Sigmoid colon (tissue), 7 donors: ENCODE measurements at regions of chr1 and their contacts with region 1.

Region 1: DNA sequence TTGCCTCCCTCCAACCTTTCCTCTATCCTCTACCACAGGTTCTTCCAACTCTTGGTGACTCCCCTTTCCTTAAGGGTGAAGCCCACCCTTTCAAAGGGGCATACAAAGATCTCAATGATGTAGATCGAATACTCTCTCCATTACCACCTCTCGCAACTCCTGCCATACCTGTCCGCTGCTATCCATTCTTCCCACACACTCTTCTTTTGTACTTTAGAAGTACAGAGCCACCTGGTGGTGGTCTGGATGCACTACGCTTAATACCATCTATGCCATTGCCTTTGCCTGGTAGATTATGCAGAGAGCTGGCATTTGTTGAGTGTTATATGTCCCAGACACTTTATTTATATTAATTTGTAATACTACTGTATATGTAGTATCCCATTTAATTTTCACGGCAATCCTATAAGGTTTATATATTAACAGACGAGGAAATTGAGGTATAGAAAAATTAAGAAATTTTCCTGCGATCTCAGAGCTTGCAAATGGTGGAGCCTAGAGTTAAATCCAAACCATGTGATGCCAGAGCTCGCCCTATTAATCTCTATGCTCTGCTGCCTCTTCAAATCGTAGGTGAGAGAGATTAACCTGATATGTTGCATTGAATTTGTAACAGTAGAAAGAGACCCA is 22.9 kb downstream of the TSHB start:
- DNase-seq: no peak
- H3K4me3 ChIP-seq: no peak overlapping the region
- H3K27ac ChIP-seq: peak overlapping the region in 1 of 4 donors; percentile 43
- H3K4me1 ChIP-seq: peaks cover 0 to 36% (median 21%) of the 10 kb centered on the region in 4 donors
- H3K27me3 ChIP-seq: no peaks in the 10 kb centered on the region
- CTCF ChIP-seq: peak; percentile 29 to 81 (median 72)
- EP300 ChIP-seq: no peak
- POLR2A ChIP-seq: no peak

Region 2: GRCh38 chr1:114757455-114758250 is 294.9 kb before region 1 on chr1 and contains the start of gene CSDE1:
- intact Hi-C with region 1: loop called (anchors 10 kb)
- DNase-seq: peak; percentile 99
- H3K4me3 ChIP-seq: peak within 1 kb of the TSS; percentile 79 to 99 (median 88)
- H3K27ac ChIP-seq: peak within 1 kb of the TSS; percentile 97 to 100 (median 98)
- H3K4me1 ChIP-seq: peaks cover 0 to 50% (median 48%) of the 10 kb centered on the region in 4 donors
- H3K27me3 ChIP-seq: no peaks in the 10 kb centered on the region
- CTCF ChIP-seq: peak in 2 of 4 experiments; percentile 34 to 35
- EP300 ChIP-seq: peak in 1 of 4 donors; percentile 13
- POLR2A ChIP-seq: peak; percentile 89 to 90
- total RNA-seq, gene CSDE1: 1,738 to 2,762 (median 1,986) TPM

Region 3: GRCh38 chr1:115112496-115113375 is 60.2 kb after region 1 on chr1:
- intact Hi-C with region 1: loop called (anchors 2 kb)
- DNase-seq: no peak
- H3K4me3 ChIP-seq: no peak overlapping the region
- H3K27ac ChIP-seq: no peak overlapping the region
- H3K4me1 ChIP-seq: peaks cover 0 to 10% (median 3%) of the 10 kb centered on the region in 4 donors
- H3K27me3 ChIP-seq: no peaks in the 10 kb centered on the region
- CTCF ChIP-seq: peak; percentile 74 to 94 (median 92)
- EP300 ChIP-seq: no peak
- POLR2A ChIP-seq: no peak